T-cell (primary cell): ENCODE measurements at regions of chr4 and their contacts with region 1.

Region 1: DNA sequence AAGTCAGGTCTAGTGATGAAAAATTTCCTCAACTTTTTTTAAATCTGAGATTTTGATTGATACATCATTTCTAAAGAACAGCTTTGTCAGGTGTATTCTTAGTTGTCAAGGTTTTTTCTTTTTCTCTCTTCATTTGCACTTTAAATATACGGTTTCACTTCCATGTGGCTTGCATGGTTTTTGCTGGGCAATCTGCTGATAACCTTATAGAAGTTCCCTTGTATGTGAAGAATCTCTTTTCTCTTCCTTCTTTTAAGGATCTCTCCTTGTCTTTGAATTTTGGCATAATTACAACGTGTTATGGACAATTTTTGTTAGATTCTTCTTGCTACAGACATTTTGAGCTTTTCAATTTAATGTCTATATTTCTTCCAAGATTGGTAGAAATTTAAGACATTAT is 76.4 kb downstream of the ZNF721 start:
- DNase-seq: no peak
- ATAC-seq: no peak
- H3K4me3 ChIP-seq: no peak overlapping the region
- H3K4me3 Mint-ChIP-seq: no peak overlapping the region
- H3K27ac ChIP-seq: no peak overlapping the region
- H3K27ac Mint-ChIP-seq: no peak overlapping the region
- H3K4me1 ChIP-seq: no peaks in the 10 kb centered on the region
- H3K4me1 Mint-ChIP-seq: no peaks in the 10 kb centered on the region
- H3K27me3 ChIP-seq: no peaks in the 10 kb centered on the region
- H3K27me3 Mint-ChIP-seq: no peaks in the 10 kb centered on the region

Region 2: DNA sequence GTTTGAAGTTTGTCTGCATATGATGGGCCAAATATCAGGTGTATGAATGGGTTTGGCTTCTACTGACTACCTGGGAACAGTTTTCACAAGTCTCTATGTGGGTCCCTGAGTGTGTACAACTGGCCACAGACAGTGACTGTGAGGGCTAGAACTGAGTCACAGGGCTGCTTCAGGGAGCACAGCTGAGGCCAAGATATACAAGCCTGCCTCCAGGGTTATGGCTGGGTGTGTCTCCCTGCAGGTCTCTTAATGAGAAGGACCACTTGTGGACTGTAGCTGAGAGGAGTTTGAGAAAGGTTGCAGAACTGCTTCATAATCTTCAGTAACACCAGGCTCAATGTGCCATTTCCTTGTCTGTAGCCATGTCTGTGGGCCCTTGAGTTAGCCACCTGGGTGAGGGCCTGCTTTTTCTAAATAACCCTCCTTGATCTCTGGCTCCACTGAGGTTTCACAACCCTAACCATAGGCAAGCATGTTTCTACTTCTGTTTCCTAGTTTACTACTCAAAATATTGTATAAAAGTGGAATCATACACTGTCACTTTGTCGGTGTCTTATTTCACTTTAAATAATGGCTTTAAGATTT is 198.6 kb before region 1 on chr4:
- CTCF ChIA-PET with region 1: no interaction called
- POLR2A ChIA-PET with region 1: interaction called in 1 of 2 experiments, 12 read pairs
- DNase-seq: no peak
- ATAC-seq: no peak
- H3K4me3 ChIP-seq: no peak overlapping the region
- H3K4me3 Mint-ChIP-seq: no peak overlapping the region
- H3K27ac ChIP-seq: no peak overlapping the region
- H3K27ac Mint-ChIP-seq: no peak overlapping the region
- H3K4me1 ChIP-seq: no peaks in the 10 kb centered on the region
- H3K4me1 Mint-ChIP-seq: no peaks in the 10 kb centered on the region
- H3K27me3 ChIP-seq: no peaks in the 10 kb centered on the region
- H3K27me3 Mint-ChIP-seq: no peaks in the 10 kb centered on the region